Naive thymus-derived CD4-positive, alpha-beta T cell (primary cell): ENCODE measurements at regions of chr3 and their contacts with region 1.

Region 1: GRCh38 chr3:120879411-120879810 is 28.6 kb upstream of the STXBP5L start:
- DNase-seq: no peak
- ATAC-seq: no peak
- H3K4me3 ChIP-seq: no peak overlapping the region
- H3K4me3 Mint-ChIP-seq: no peak overlapping the region
- H3K27ac ChIP-seq: no peak overlapping the region
- H3K27ac Mint-ChIP-seq: no peak overlapping the region
- H3K4me1 ChIP-seq: no peaks in the 10 kb centered on the region
- H3K4me1 Mint-ChIP-seq: no peaks in the 10 kb centered on the region
- H3K27me3 ChIP-seq: peaks cover 0 to 5% of the 10 kb centered on the region in 2 donors
- H3K27me3 Mint-ChIP-seq: peaks cover 3 to 32% (median 19%) of the 10 kb centered on the region in 5 donors

Region 2: GRCh38 chr3:120908030-120908794 is 28.8 kb after region 1 on chr3 and contains the start of gene STXBP5L:
- CTCF ChIA-PET with region 1: no interaction called
- POLR2A ChIA-PET with region 1: no interaction called
- intact Hi-C with region 1: loop called in 1 of 2 experiments (anchors 2 kb)
- DNase-seq: peak in 7 of 9 donors; percentile 5 to 62 (median 10)
- ATAC-seq: peak; percentile 67
- H3K4me3 ChIP-seq: peak within 1 kb of the TSS; percentile 8
- H3K4me3 Mint-ChIP-seq: peak within 1 kb of the TSS; percentile 70 to 90 (median 83)
- H3K27ac ChIP-seq: no peak within 1 kb of the TSS
- H3K27ac Mint-ChIP-seq: peak within 1 kb of the TSS in 1 of 9 donors; percentile 83
- H3K4me1 ChIP-seq: peaks cover 0 to 8% of the 10 kb centered on the region in 2 donors
- H3K4me1 Mint-ChIP-seq: peaks cover 10 to 26% (median 21%) of the 10 kb centered on the region in 7 donors
- H3K27me3 ChIP-seq: peaks cover 7 to 24% of the 10 kb centered on the region in 2 donors
- H3K27me3 Mint-ChIP-seq: peaks cover 53 to 74% (median 66%) of the 10 kb centered on the region in 5 donors
- total RNA-seq, gene STXBP5L: not detected